ENCODE measurements at regions of chr15 and their contacts with region 1.

Region 1: DNA sequence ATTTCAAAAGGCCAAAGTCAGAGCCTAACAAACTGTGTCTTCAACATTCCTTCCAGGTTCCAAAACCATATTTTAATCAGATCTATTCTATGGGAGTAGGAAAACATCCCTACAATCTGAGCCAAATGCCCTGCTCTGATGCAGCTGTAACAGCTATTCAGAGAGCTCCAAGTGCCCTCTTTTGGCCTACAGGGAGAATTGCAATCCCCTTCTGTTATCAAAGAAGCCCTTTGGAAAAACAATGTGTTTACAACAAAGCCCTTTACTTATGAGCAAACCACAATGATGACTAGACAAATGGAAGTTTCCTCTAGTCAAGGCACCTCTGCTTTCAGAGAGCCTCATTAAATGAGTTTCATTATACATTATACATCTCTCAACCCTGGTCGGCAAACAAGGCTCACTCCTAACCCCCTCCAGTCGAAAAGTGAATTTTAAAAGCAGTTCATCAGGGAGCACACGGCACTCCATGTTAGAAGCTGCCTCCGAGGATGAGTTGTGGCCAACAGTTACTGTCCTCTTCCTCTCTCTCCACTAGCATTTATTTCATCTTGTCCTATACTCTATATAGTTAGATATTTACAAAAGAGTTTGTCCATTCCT is 42.6 kb upstream of the TMCO5A start:
- DNase-seq: peak; percentile 5
- CTCF ChIP-seq: peak; percentile 77

Region 2: GRCh38 chr15:36501063-36501678 is 1390.7 kb before region 1 on chr15:
- in situ Hi-C with region 1: loop called (anchors 25 kb)
- DNase-seq: peak; percentile 42
- CTCF ChIP-seq: peak; percentile 73

Region 3: DNA sequence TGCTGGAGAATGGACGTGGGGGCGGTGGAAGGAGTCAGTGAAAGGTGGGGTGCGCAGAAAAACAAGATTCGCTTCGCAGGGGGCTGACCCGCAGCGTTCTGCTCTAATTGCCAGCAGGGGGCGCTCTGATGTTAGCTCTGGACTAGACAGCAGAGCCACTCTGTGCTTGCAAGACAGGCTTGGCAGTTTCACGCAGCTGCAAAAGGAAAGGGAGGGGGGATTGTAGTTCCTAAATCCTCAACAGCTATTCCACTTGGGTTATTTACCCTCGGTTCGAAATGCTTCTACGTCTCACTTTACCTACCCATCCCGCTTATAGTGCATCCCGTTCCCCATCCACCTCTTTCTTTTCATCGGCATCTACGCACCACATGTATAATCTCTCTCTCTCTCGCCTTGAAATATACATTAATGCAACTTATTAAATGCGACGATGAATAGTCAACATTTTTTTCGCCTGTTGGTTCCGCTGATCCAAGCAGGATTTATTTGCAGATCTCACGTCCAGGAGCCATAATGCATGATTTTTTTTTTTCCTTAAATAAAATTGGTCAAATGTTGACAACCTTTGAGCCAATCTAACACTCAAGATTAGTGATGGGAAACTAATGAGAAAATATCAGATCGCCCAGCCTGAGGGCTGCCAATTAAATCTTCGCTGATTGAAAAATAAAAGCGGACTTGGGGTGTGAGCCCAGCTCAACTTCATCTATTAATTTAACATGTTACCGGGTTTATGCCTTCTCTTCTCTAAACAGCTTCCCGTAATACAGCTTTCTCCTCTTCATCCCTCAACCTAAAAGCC is 1008.0 kb before region 1 on chr15:
- in situ Hi-C with region 1: loop called (anchors 25 kb)
- DNase-seq: peak; percentile 85
- CTCF ChIP-seq: peak; percentile 88

Region 4: GRCh38 chr15:38111070-38111469 is 219.2 kb after region 1 on chr15:
- in situ Hi-C with region 1: no loop called
- DNase-seq: no peak
- CTCF ChIP-seq: no peak